ENCODE measurements at regions of chr6 and their contacts with region 1.

Region 1: GRCh38 chr6:111683749-111684267 is 78.1 kb upstream of the TRAF3IP2 start:
- DNase-seq: peak in 2 of 9 donors; percentile 18 to 19
- ATAC-seq: no peak
- H3K4me3 ChIP-seq: no peak overlapping the region
- H3K4me3 Mint-ChIP-seq: peak overlapping the region in 8 of 10 donors; percentile 7 to 70 (median 58)
- H3K27ac ChIP-seq: peak overlapping the region; percentile 46
- H3K27ac Mint-ChIP-seq: peak overlapping the region in 8 of 9 donors; percentile 78 to 94 (median 86)
- H3K4me1 ChIP-seq: peaks cover 34% of the 10 kb centered on the region in 2 donors
- H3K4me1 Mint-ChIP-seq: peaks cover 27 to 93% (median 84%) of the 10 kb centered on the region in 7 donors
- H3K27me3 ChIP-seq: no peaks in the 10 kb centered on the region
- H3K27me3 Mint-ChIP-seq: no peaks in the 10 kb centered on the region

Region 2: GRCh38 chr6:111699123-111699522 is 15.3 kb after region 1 on chr6:
- CTCF ChIA-PET with region 1: no interaction called
- POLR2A ChIA-PET with region 1: interaction called, 3 read pairs
- intact Hi-C with region 1: loop called in 1 of 2 experiments (anchors 2 kb)
- DNase-seq: no peak
- ATAC-seq: peak; percentile 38
- H3K4me3 ChIP-seq: no peak overlapping the region
- H3K4me3 Mint-ChIP-seq: peak overlapping the region in 8 of 10 donors; percentile 2 to 60 (median 18)
- H3K27ac ChIP-seq: no peak overlapping the region
- H3K27ac Mint-ChIP-seq: peak overlapping the region in 5 of 9 donors; percentile 7 to 83 (median 63)
- H3K4me1 ChIP-seq: peaks cover 9 to 16% of the 10 kb centered on the region in 2 donors
- H3K4me1 Mint-ChIP-seq: peaks cover 18 to 67% (median 40%) of the 10 kb centered on the region in 7 donors
- H3K27me3 ChIP-seq: no peaks in the 10 kb centered on the region
- H3K27me3 Mint-ChIP-seq: no peaks in the 10 kb centered on the region

Region 3: GRCh38 chr6:112117554-112117953 is 433.7 kb after region 1 on chr6:
- CTCF ChIA-PET with region 1: no interaction called
- POLR2A ChIA-PET with region 1: no interaction called
- intact Hi-C with region 1: no loop called
- DNase-seq: no peak
- ATAC-seq: no peak
- H3K4me3 ChIP-seq: no peak overlapping the region
- H3K4me3 Mint-ChIP-seq: peak overlapping the region in 1 of 10 donors; percentile 63
- H3K27ac ChIP-seq: no peak overlapping the region
- H3K27ac Mint-ChIP-seq: peak overlapping the region in 1 of 9 donors; percentile 81
- H3K4me1 ChIP-seq: no peaks in the 10 kb centered on the region
- H3K4me1 Mint-ChIP-seq: peaks cover 0 to 19% (median 0%) of the 10 kb centered on the region in 7 donors
- H3K27me3 ChIP-seq: no peaks in the 10 kb centered on the region
- H3K27me3 Mint-ChIP-seq: peaks cover 14 to 22% (median 17%) of the 10 kb centered on the region in 5 donors

Measured in naive thymus-derived CD4-positive, alpha-beta T cell (primary cell).